Ascending aorta (tissue), 2 donors: ENCODE measurements at regions of chr7 and their contacts with region 1.

Region 1: GRCh38 chr7:47651355-47652317 is 69.7 kb upstream of the TNS3 start:
- DNase-seq: peak in 1 of 2 donors; percentile 81
- H3K4me3 ChIP-seq: no peak overlapping the region
- H3K27ac ChIP-seq: peak overlapping the region; percentile 48 to 76
- H3K4me1 ChIP-seq: peaks cover 9 to 25% of the 10 kb centered on the region in 2 donors
- H3K27me3 ChIP-seq: no peaks in the 10 kb centered on the region
- CTCF ChIP-seq: no peak

Region 2: GRCh38 chr7:47453093-47454049 is 198.3 kb before region 1 on chr7:
- intact Hi-C with region 1: loop called (anchors 5 kb)
- DNase-seq: peak; percentile 80 to 92
- H3K4me3 ChIP-seq: peak overlapping the region; percentile 20 to 58
- H3K27ac ChIP-seq: peak overlapping the region; percentile 86 to 89
- H3K4me1 ChIP-seq: peaks cover 22 to 36% of the 10 kb centered on the region in 2 donors
- H3K27me3 ChIP-seq: no peaks in the 10 kb centered on the region
- CTCF ChIP-seq: no peak

Region 3: DNA sequence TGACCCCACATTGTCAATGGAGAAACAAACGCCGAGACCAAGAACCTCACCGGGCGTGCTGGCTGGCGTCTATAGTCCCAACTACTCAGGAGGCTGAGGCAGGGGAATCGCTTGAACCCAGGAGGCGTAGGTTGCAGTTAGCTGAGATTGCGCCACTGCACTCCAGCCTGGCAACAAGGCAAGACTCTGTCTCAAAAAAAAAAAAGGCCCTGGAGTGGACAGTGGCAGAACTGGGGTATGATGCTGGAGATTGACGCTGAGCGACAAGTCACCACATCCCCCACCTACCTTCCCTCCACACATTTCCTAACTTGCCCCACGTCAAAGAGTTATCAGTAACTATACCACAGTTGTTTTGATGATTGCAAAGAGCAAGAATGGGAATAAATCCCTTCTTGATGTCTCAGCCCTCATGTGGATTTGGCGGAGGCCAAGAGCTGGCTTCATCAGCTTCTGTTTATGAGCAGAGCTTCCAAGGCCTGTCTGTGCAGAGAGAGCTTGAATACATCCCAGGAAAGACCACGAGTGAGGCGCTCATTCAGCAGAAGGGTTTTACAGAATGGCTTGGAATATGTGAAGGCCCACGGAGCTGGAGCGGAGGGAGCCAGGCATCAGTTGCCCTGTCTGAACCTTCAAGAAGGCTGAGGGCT is 41.7 kb before region 1 on chr7:
- intact Hi-C with region 1: loop called (anchors 5 kb)
- DNase-seq: no peak
- H3K4me3 ChIP-seq: no peak overlapping the region
- H3K27ac ChIP-seq: no peak overlapping the region
- H3K4me1 ChIP-seq: peaks cover 10 to 19% of the 10 kb centered on the region in 2 donors
- H3K27me3 ChIP-seq: no peaks in the 10 kb centered on the region
- CTCF ChIP-seq: no peak

Region 4: GRCh38 chr7:47757921-47758411 is 106.3 kb after region 1 on chr7:
- intact Hi-C with region 1: loop called (anchors 5 kb)
- DNase-seq: peak; percentile 63 to 93
- H3K4me3 ChIP-seq: no peak overlapping the region
- H3K27ac ChIP-seq: peak overlapping the region; percentile 70 to 86
- H3K4me1 ChIP-seq: peaks cover 0 to 12% of the 10 kb centered on the region in 2 donors
- H3K27me3 ChIP-seq: no peaks in the 10 kb centered on the region
- CTCF ChIP-seq: no peak

Region 5: GRCh38 chr7:47771336-47771989 is 119.8 kb after region 1 on chr7:
- intact Hi-C with region 1: loop called (anchors 5 kb)
- DNase-seq: peak in 1 of 2 donors; percentile 94
- H3K4me3 ChIP-seq: no peak overlapping the region
- H3K27ac ChIP-seq: peak overlapping the region; percentile 76 to 79
- H3K4me1 ChIP-seq: peaks cover 3 to 28% of the 10 kb centered on the region in 2 donors
- H3K27me3 ChIP-seq: no peaks in the 10 kb centered on the region
- CTCF ChIP-seq: peak in 2 of 3 experiments; percentile 32 to 37